ENCODE measurements at regions of chr3 and their contacts with region 1.

Region 1: GRCh38 chr3:138915503-138916498 is 31.1 kb downstream of the FOXL2 start:
- H3K4me3 ChIP-seq: peak overlapping the region; percentile 88
- H3K27ac ChIP-seq: peak overlapping the region; percentile 68; the same call in 1 of the 2 replicates
- H3K4me1 ChIP-seq: no peaks in the 10 kb centered on the region
- CTCF ChIP-seq: peak; percentile 89

Region 2: DNA sequence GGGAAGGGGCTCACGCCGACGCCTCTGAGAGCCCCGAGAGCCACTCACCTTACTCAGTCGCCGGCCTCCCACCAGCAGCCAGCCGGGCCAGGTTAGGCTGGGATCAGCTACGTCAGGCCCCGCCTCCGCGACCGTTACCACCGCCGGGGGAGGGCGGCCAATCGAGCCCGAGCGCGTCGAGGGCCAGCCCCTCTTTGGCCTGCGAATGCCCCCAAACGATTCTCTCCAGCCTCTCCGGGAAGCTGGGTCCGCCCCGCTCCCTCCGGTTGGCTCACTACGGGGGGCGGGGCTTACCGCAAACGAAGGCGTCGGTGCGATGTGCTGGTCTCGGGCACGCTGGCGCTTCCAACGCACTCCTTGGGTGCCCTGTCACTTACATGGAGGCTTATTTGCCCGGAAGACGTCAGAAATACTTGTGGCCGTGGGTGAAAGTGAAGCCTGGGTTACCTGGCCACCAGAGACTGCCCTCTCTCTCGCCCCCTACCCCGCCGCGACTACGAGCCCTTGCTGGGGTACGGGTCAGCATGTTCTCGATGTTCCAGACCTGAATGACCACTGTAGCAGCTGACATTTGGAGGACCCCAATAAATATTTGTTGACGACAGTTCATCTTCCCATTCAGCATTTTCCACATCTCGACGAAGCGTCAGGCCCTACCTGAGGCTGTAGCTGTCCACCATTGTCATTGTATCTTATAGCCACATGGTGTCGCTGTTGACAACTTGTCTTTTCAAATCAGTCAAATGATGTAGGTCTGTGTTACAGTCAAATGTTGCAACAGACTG is 321.5 kb before region 1 on chr3 and contains the start of gene CEP70:
- CTCF ChIA-PET with region 1: interaction called, 47 read pairs
- POLR2A ChIA-PET with region 1: interaction called, 23 read pairs
- H3K4me3 ChIP-seq: peak within 1 kb of the TSS; percentile 89
- H3K27ac ChIP-seq: peak within 1 kb of the TSS; percentile 59
- H3K4me1 ChIP-seq: no peaks in the 10 kb centered on the region
- CTCF ChIP-seq: peak; percentile 89

Region 3: DNA sequence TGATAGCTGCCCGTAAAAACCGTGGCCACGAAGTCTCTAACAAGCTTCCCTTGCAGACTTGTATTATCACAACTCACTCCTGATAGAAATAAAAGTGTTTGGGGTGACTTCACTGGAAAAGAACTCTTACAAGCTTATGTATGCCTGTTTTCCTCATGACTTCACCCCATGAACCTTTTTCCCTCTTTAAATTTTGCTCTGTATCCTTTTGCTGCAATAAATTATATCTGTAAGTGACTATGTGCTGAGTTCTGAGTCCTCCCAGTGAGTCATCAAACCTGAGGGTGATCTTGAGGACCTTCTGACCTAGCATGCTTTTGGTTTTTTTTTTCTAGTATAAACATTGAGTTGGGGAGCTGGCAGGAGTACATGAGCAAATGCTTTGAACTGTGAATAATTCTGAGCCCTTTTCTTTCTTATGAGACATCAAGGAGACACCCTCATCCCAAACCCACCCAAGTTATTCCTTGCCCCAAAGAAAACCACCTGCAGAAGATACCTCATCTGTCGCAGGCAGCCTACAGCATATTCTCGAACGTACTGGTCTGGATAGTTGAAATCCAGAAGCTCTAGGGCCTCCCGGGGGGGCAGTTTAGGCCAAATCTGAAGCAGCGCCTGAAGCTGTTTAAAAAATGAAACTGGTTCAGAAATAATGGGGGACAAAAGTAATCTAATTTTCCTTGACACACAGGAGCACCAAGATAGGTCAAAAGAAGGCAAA is 221.4 kb before region 1 on chr3:
- CTCF ChIA-PET with region 1: interaction called, 66 read pairs
- POLR2A ChIA-PET with region 1: interaction called, 9 read pairs
- H3K4me3 ChIP-seq: no peak overlapping the region
- H3K27ac ChIP-seq: no peak overlapping the region
- H3K4me1 ChIP-seq: peaks cover 10% of the 10 kb centered on the region
- CTCF ChIP-seq: no peak

Region 4: GRCh38 chr3:138782755-138783154 is 133.0 kb before region 1 on chr3:
- CTCF ChIA-PET with region 1: interaction called, 10 read pairs
- POLR2A ChIA-PET with region 1: no interaction called
- H3K4me3 ChIP-seq: no peak overlapping the region
- H3K27ac ChIP-seq: no peak overlapping the region
- H3K4me1 ChIP-seq: no peaks in the 10 kb centered on the region
- CTCF ChIP-seq: no peak

Region 5: DNA sequence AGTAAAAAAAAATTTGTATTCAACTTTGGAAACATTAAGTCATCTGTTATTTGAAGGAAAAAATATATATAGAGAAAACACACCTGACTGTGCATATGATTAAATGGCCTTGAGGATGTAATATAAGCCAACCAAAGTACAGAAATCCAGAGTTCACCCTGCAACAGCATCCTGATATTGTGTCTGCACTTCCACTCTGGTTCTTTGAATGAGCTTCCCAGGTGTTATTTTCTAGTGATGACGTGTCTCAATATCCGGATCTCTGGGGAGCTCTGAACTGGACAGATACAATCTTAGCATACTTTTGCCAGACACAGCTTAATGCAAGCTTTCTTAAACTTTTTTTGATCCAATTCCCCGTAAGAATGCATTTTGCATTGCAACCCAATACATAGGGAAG is 61.6 kb before region 1 on chr3:
- CTCF ChIA-PET with region 1: interaction called, 12 read pairs
- POLR2A ChIA-PET with region 1: no interaction called
- H3K4me3 ChIP-seq: no peak overlapping the region
- H3K27ac ChIP-seq: no peak overlapping the region
- H3K4me1 ChIP-seq: no peaks in the 10 kb centered on the region
- CTCF ChIP-seq: no peak

Region 6: GRCh38 chr3:138898301-138898700 is 17.5 kb before region 1 on chr3:
- CTCF ChIA-PET with region 1: interaction called, 32 read pairs
- POLR2A ChIA-PET with region 1: interaction called, 4 read pairs
- H3K4me3 ChIP-seq: no peak overlapping the region
- H3K27ac ChIP-seq: no peak overlapping the region
- H3K4me1 ChIP-seq: no peaks in the 10 kb centered on the region
- CTCF ChIP-seq: no peak

Measured in HEK293 (cell line).